ENCODE measurements at regions of chr21 and their contacts with region 1.

Region 1: GRCh38 chr21:41068967-41069642 is 98.9 kb upstream of the BACE2 start:
- DNase-seq: peak; percentile 88
- ATAC-seq: peak; percentile 89

Region 2: GRCh38 chr21:40466893-40467501 is 602.1 kb before region 1 on chr21:
- intact Hi-C with region 1: loop called (anchors 2 kb)
- DNase-seq: no peak
- ATAC-seq: no peak

Region 3: DNA sequence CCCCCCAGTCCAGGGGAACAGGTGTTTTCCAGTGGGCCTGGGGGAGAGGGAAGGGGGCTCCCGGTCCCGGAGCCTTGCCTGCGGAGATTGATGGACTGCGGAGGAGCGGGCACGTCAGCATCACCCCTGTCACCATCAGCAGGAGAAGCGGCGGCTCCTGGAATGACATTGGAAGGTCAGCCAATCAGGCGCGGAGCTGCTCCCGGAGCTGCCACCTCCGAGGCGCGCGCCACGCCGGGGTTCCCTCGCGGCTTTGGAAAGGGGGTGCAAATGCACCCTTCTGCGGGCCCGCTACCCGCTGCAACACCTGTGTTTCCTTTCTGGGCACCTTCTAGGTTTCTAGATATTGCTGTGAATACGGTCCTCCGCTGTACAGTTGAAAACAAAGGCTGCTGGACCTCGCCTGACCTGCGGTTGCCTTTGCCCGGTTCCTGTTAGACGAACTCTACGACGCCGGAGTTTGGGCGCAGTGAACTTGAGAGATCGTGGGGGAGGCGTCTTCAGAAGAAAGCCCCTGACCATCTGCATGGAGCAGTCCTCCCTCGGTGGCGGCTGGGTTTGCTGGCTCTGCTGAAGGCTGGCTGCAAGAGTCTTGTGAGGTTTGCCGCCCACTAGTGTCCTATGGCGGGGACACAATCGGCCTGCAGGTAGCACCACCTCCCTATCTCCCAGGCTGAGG is 227.4 kb before region 1 on chr21:
- intact Hi-C with region 1: loop called (anchors 5 kb)
- DNase-seq: no peak
- ATAC-seq: peak; percentile 80